WTC11 (cell line): ENCODE measurements at regions of chr10 and their contacts with region 1.

Region 1: DNA sequence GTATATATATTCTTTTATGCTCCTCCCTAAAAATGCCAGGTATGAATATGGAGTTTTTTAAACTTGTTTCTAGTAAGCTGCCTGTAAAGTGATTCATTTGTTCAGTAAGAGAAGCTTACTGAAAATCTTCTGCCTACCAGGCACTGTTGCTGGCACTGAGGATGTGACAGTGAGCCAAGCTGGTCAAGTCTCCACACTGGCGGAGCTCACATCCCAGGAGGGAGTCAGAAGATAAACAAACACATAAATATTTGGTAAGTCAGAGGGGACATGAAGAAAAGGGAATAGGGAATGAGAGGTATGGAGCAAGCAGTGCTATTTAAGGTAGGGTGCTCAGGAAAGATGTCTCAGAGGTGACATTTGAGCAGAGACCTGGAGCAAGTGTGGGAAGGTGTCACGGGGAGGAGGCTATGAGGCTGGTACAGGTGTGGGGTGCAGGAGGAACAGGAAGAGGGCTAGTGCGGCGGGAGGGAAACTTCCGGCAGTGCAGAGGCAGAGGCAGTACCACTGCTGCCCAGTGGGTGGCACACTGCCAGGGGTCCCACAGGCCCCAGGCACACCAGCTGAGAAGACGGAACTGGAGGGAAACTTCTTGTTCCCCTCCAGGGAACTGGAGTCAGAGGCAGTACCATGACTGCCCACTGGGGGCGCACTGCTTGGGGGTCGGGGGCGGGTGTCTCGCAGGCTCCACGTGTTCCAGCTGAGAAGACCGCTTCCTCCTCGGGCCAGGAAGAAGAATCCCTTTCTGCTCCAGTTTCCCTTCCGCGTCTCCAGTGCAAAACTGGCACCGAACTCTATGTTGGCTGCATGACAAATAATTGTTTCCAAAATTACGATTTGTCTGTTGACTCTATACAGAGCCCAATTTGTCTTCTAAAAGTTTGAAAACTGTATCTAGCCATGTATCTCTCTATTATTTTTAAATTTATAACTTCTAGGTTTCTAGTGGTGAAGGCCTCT is 161.0 kb downstream of the TEX36 start:
- DNase-seq: peak; percentile 89
- ATAC-seq: peak; percentile 100
- H3K4me3 Mint-ChIP-seq: no peak overlapping the region
- H3K27ac Mint-ChIP-seq: no peak overlapping the region
- H3K4me1 Mint-ChIP-seq: 0 out of 2 replicates have a peak, but pooled peaks cover 2% of the 10 kb centered on the region
- H3K27me3 Mint-ChIP-seq: no peaks in the 10 kb centered on the region; the same call in 1 of the 2 replicates
- CTCF ChIP-seq: peak; percentile 93

Region 2: GRCh38 chr10:125533866-125534265 is 11.9 kb after region 1 on chr10:
- CTCF ChIA-PET with region 1: interaction called, 11 read pairs
- POLR2A ChIA-PET with region 1: no interaction called
- DNase-seq: no peak
- ATAC-seq: no peak
- H3K4me3 Mint-ChIP-seq: no peak overlapping the region
- H3K27ac Mint-ChIP-seq: no peak overlapping the region
- H3K4me1 Mint-ChIP-seq: no peaks in the 10 kb centered on the region
- H3K27me3 Mint-ChIP-seq: no peaks in the 10 kb centered on the region; the same call in 1 of the 2 replicates
- CTCF ChIP-seq: no peak

Region 3: DNA sequence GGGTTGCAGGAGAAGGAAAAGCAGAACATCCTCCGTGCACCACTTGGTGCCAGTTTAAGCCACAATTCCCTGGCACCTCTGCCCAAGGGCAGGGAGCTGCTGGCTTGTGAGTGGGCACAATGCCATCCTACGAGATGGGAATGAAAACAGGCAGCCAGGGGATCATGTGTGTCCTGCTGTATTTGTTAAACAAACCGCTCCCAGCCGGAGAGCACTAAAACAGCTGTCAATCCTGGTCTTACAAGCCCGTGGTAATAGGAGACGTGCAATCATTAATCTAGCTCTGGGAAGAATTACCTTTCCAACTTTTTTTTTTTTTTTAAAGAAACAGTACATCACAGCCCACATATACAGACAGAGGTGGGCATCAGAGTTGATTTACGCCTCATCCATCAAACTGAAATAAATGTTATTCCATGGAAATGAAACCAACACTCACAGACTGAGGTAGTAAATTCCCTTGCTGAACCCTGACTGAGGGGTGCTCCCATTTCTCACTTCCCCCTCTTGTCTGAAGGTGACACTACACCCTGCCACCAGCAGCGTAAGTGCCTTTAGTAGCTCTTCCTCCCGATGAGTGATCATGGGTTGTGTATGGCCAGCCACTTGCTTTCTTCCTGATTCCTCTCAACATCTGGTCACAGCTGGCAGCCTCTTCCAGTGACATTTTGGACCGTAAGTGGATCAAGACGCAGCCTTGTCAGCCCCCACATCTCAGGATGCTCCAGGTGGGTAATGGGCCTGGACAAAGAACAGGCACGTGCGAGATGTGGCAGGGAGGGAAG is 17.1 kb after region 1 on chr10:
- CTCF ChIA-PET with region 1: interaction called, 11 read pairs
- POLR2A ChIA-PET with region 1: no interaction called
- DNase-seq: no peak
- ATAC-seq: peak; percentile 48; the same call in 1 of the 2 replicates
- H3K4me3 Mint-ChIP-seq: no peak overlapping the region
- H3K27ac Mint-ChIP-seq: no peak overlapping the region
- H3K4me1 Mint-ChIP-seq: no peaks in the 10 kb centered on the region
- H3K27me3 Mint-ChIP-seq: peaks cover 3% of the 10 kb centered on the region
- CTCF ChIP-seq: no peak

Region 4: DNA sequence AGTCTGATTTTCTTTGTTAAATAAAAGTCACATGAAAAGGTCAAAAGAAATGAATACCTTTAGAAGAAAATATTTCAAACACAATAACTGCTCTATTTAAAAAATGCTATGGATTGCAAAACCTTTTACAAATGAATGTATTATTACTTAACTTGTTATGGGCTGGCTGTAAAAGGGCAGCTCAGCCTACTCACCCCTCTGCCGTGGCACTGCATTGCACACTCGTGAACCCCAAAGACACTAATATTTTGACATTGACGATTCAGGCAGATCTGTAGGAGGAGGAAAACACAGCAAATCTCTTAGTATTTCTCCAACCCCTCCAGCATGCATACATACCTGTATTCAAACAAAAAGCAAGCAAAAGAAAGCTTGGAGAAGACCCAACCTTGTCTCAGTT is 523.9 kb after region 1 on chr10:
- CTCF ChIA-PET with region 1: no interaction called
- POLR2A ChIA-PET with region 1: interaction called, 10 read pairs
- DNase-seq: no peak
- ATAC-seq: no peak
- H3K4me3 Mint-ChIP-seq: no peak overlapping the region
- H3K27ac Mint-ChIP-seq: no peak overlapping the region
- H3K4me1 Mint-ChIP-seq: peaks cover 9% of the 10 kb centered on the region
- H3K27me3 Mint-ChIP-seq: no peaks in the 10 kb centered on the region
- CTCF ChIP-seq: no peak